ENCODE measurements at regions of chr9 and their contacts with region 1.

Region 1: DNA sequence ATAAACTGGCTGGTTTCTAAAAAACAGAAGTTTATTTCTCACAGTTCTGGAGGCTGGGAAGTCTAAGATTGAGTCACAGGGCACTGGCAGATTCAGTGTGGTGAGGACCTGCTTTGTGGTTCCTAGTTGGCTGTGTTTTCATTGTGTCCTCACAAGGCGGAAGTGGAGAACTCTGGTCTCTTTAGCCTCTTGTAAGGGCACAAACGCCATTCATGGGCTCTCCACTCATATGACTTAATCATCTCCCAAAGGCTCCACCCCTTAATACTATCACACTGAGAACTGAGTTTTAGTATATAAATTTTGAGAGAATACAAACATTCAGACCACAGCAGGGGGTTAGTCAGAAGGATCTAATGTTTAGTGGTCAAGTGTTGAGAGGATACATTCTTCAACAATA is 208.2 kb downstream of the SEC61B start:
- DNase-seq: no peak
- CTCF ChIP-seq: no peak

Region 2: GRCh38 chr9:99184475-99185347 is 245.6 kb before region 1 on chr9:
- CTCF ChIA-PET with region 1: no interaction called
- POLR2A ChIA-PET with region 1: no interaction called
- DNase-seq: peak; percentile 78
- CTCF ChIP-seq: peak; percentile 93

Region 3: GRCh38 chr9:99419070-99419469 is 11.2 kb before region 1 on chr9:
- CTCF ChIA-PET with region 1: interaction called, 11 read pairs
- POLR2A ChIA-PET with region 1: no interaction called
- DNase-seq: no peak
- CTCF ChIP-seq: no peak

Measured in GM10248 (cell line).